CD8-positive, alpha-beta T cell (primary cell): ENCODE measurements at regions of chr1 and their contacts with region 1.

Region 1: GRCh38 chr1:109532365-109533136 is 7.1 kb upstream of the GPR61 start:
- DNase-seq: peak; percentile 83 to 97 (median 91)
- ATAC-seq: peak; percentile 90
- H3K4me3 ChIP-seq: peak overlapping the region; percentile 42 to 57
- H3K4me3 Mint-ChIP-seq: peak overlapping the region; percentile 80
- H3K27ac ChIP-seq: peak overlapping the region; percentile 17 to 52
- H3K27ac Mint-ChIP-seq: peak overlapping the region; percentile 67
- H3K4me1 ChIP-seq: peaks cover 31% of the 10 kb centered on the region
- H3K4me1 Mint-ChIP-seq: peaks cover 31% of the 10 kb centered on the region
- H3K27me3 ChIP-seq: no peaks in the 10 kb centered on the region
- H3K27me3 Mint-ChIP-seq: no peaks in the 10 kb centered on the region
- CTCF ChIP-seq: peak; percentile 88

Region 2: GRCh38 chr1:109213785-109214468 is 318.6 kb before region 1 on chr1 and contains the start of gene SARS1:
- CTCF ChIA-PET with region 1: no interaction called
- POLR2A ChIA-PET with region 1: no interaction called
- intact Hi-C with region 1: no loop called
- DNase-seq: peak; percentile 67 to 94 (median 85)
- ATAC-seq: peak; percentile 86
- H3K4me3 ChIP-seq: peak within 1 kb of the TSS; percentile 96 to 100
- H3K4me3 Mint-ChIP-seq: peak within 1 kb of the TSS; percentile 100
- H3K27ac ChIP-seq: peak within 1 kb of the TSS; percentile 79
- H3K27ac Mint-ChIP-seq: peak within 1 kb of the TSS; percentile 95
- H3K4me1 ChIP-seq: peaks cover 27% of the 10 kb centered on the region
- H3K4me1 Mint-ChIP-seq: peaks cover 44% of the 10 kb centered on the region
- H3K27me3 ChIP-seq: no peaks in the 10 kb centered on the region
- H3K27me3 Mint-ChIP-seq: peaks cover 2% of the 10 kb centered on the region
- CTCF ChIP-seq: no peak
- total RNA-seq, gene SARS1: 113 to 118 TPM

Region 3: GRCh38 chr1:109263597-109264398 is 268.8 kb before region 1 on chr1:
- CTCF ChIA-PET with region 1: interaction called, 11 read pairs
- POLR2A ChIA-PET with region 1: no interaction called
- intact Hi-C with region 1: loop called (anchors 1 kb)
- DNase-seq: peak; percentile 54 to 81 (median 75)
- ATAC-seq: peak; percentile 97
- H3K4me3 ChIP-seq: no peak overlapping the region
- H3K4me3 Mint-ChIP-seq: no peak overlapping the region
- H3K27ac ChIP-seq: no peak overlapping the region
- H3K27ac Mint-ChIP-seq: no peak overlapping the region
- H3K4me1 ChIP-seq: no peaks in the 10 kb centered on the region
- H3K4me1 Mint-ChIP-seq: no peaks in the 10 kb centered on the region
- H3K27me3 ChIP-seq: no peaks in the 10 kb centered on the region
- H3K27me3 Mint-ChIP-seq: no peaks in the 10 kb centered on the region
- CTCF ChIP-seq: peak; percentile 99

Region 4: DNA sequence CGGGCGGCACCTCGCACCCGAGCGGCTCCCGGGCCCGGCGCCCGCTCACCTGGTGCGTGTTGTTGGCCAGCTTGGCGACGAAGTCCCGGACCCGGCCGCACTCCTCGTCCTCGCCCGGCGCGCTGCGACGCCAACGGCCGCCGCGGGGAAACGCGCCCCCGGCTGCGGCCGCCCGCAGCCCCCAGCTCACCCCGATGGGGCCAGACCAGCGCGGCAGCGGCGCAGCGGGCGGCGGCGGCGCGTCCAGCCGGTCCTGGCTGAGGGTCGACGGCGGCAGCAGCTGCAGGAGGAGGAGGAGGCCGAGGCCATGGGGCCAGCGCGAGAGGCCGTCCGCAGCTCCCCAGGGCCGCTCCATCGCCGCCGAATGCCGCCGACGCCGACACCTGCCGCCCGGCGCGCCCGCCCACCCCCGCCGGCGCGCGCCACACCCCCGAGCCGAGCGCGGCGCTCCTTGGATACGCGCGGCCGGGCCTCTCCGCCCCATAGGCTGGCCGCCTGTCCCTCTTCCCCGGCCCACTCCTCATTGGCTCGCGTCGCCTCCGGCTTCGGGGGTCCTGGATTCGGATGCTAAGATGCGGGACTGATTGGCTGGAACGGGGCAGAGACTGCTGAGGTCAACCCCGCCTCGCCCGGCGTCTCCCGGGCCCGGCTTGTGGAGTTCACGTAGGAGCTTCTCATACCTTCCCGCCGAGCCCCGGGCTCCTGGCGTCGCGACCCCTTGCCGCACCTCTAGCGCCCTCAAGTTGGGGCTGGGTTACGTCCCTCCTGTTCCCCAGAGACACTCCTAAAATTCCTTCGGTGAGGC is 134.8 kb before region 1 on chr1 and contains the start of gene SORT1:
- CTCF ChIA-PET with region 1: interaction called, 17 read pairs
- POLR2A ChIA-PET with region 1: interaction called, 4 read pairs
- intact Hi-C with region 1: loop called (anchors 1 to 2 kb)
- DNase-seq: peak; percentile 25 to 84 (median 71)
- ATAC-seq: peak; percentile 97
- H3K4me3 ChIP-seq: peak within 1 kb of the TSS; percentile 49 to 53
- H3K4me3 Mint-ChIP-seq: peak within 1 kb of the TSS; percentile 83
- H3K27ac ChIP-seq: no peak within 1 kb of the TSS
- H3K27ac Mint-ChIP-seq: no peak within 1 kb of the TSS
- H3K4me1 ChIP-seq: peaks cover 9% of the 10 kb centered on the region
- H3K4me1 Mint-ChIP-seq: peaks cover 15% of the 10 kb centered on the region
- H3K27me3 ChIP-seq: peaks cover 10 to 21% of the 10 kb centered on the region in 2 experiments
- H3K27me3 Mint-ChIP-seq: peaks cover 34% of the 10 kb centered on the region
- CTCF ChIP-seq: no peak
- total RNA-seq, gene SORT1: 0.61 to 0.73 TPM

Region 5: DNA sequence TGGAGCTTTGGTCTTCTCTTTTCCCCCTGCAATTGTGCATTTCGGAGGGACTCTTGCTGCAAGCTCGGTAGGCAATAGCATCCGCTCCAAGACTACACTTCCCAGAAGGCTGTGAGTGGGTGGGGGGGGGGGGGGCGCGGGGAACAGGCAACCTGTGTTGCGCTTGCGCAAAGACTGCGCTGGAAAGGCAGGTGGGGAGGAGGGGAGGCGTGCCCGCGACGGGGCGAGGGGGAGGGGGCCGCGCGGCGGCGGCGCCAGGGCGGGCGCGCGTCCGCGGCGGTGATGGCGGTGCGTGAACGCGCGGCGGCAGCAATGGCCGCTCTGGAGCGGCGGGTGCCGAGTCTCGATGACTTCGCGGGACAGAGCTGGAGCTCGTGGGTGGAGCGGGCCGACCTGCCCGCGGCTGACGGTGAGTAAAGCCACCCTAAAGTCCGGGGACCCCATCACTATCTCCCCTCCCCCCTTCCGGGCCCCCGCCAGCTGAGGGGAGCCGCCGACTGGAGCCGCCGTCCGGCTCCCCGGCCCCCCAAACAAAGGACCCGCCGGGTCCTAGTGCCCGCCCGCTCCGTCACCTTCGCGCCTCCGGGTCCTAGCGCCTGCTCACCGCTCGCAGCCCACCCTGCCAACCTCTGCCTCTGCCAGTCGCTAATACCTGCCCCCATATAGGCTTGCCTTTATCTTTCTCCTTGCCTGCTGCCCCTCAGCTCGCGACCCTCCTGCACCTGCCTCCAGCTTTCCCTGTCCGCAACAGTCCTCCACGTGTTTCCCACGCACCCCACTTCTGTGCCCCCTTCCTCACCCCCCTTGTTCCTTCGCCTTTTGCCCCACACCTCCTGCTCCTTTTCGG is 48.7 kb before region 1 on chr1 and contains the start of gene ATXN7L2:
- CTCF ChIA-PET with region 1: interaction called, 1,903 read pairs
- POLR2A ChIA-PET with region 1: interaction called, 132 read pairs
- intact Hi-C with region 1: no loop called
- DNase-seq: peak; percentile 87 to 97 (median 92)
- ATAC-seq: peak; percentile 81
- H3K4me3 ChIP-seq: peak within 1 kb of the TSS; percentile 78 to 90
- H3K4me3 Mint-ChIP-seq: peak within 1 kb of the TSS; percentile 94
- H3K27ac ChIP-seq: peak within 1 kb of the TSS; percentile 78 to 93
- H3K27ac Mint-ChIP-seq: peak within 1 kb of the TSS; percentile 91
- H3K4me1 ChIP-seq: peaks cover 22% of the 10 kb centered on the region
- H3K4me1 Mint-ChIP-seq: peaks cover 35% of the 10 kb centered on the region
- H3K27me3 ChIP-seq: no peaks in the 10 kb centered on the region
- H3K27me3 Mint-ChIP-seq: peaks cover 2% of the 10 kb centered on the region
- CTCF ChIP-seq: no peak
- total RNA-seq, gene ATXN7L2: 16.8 to 19.4 TPM

Region 6: DNA sequence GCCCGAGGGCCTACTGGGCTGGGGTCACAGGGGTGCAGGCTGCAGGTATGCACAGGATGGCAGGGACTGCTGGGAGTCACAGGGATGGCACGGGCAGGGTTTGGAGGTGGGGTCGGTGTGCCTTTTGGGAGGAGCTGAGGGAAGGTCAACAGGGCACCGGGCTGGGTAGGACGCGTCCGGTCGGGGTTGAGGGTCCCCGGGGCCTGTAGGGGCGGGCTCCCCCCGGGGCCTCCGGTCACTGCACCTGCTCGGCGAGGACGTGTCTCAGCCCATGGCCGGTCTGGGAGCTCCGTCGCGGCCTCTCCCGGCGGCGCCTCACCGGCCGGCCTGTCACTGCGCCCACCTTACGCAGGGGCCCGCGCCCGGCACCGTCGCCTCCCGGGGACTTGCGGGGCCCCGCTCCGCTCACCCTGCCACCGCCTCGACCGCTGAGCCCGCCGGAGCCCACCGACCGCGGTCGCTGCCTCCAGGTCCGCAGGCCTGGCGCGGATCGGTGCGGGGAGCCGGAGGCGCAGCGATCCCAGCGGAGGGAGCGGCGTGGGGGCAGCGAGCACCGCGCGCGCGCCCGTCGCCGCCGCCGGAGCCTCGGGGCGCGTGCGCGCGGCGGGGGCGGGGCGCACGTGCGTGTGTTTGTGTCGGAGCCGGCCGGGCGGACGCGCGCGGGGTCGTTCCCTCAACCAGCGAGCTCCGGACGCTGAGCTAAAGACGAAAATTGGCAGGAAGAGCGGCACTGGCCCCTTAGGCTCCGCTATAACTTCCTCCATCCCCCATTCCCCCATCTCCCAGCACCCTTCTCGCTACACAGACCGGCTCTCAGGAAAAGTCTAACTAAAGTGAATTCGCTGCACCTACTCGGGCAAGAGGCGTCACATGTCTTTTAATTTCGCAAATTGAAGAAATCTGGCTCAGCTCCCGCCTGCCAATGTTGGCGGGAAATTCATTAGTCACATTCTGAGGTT is 23.1 kb before region 1 on chr1 and contains the start of gene AMIGO1:
- CTCF ChIA-PET with region 1: interaction called, 1,903 read pairs
- POLR2A ChIA-PET with region 1: interaction called, 22 read pairs
- intact Hi-C with region 1: loop called in 1 of 2 experiments (anchors 1 kb)
- DNase-seq: peak; percentile 21 to 86 (median 66)
- ATAC-seq: peak; percentile 79
- H3K4me3 ChIP-seq: peak within 1 kb of the TSS; percentile 67 to 83
- H3K4me3 Mint-ChIP-seq: peak within 1 kb of the TSS; percentile 91
- H3K27ac ChIP-seq: peak within 1 kb of the TSS; percentile 45 to 54
- H3K27ac Mint-ChIP-seq: peak within 1 kb of the TSS; percentile 94
- H3K4me1 ChIP-seq: peaks cover 67% of the 10 kb centered on the region
- H3K4me1 Mint-ChIP-seq: peaks cover 68% of the 10 kb centered on the region
- H3K27me3 ChIP-seq: no peaks in the 10 kb centered on the region
- H3K27me3 Mint-ChIP-seq: no peaks in the 10 kb centered on the region
- CTCF ChIP-seq: no peak
- total RNA-seq, gene AMIGO1: 8.6 to 9.6 TPM

Region 7: GRCh38 chr1:109548321-109549267 is 16.0 kb after region 1 on chr1 and contains the start of gene GNAI3:
- CTCF ChIA-PET with region 1: interaction called, 77 read pairs
- POLR2A ChIA-PET with region 1: interaction called, 3 read pairs
- intact Hi-C with region 1: no loop called
- DNase-seq: peak; percentile 90 to 98 (median 96)
- ATAC-seq: peak; percentile 85
- H3K4me3 ChIP-seq: peak within 1 kb of the TSS; percentile 74 to 98
- H3K4me3 Mint-ChIP-seq: peak within 1 kb of the TSS; percentile 98
- H3K27ac ChIP-seq: peak within 1 kb of the TSS; percentile 89 to 97
- H3K27ac Mint-ChIP-seq: peak within 1 kb of the TSS; percentile 99
- H3K4me1 ChIP-seq: peaks cover 28% of the 10 kb centered on the region
- H3K4me1 Mint-ChIP-seq: peaks cover 60% of the 10 kb centered on the region
- H3K27me3 ChIP-seq: no peaks in the 10 kb centered on the region
- H3K27me3 Mint-ChIP-seq: no peaks in the 10 kb centered on the region
- CTCF ChIP-seq: no peak
- total RNA-seq, gene GNAI3: 6.8 to 7.1 TPM

Region 8: GRCh38 chr1:109643385-109644230 is 111.1 kb after region 1 on chr1:
- CTCF ChIA-PET with region 1: interaction called, 14 read pairs
- POLR2A ChIA-PET with region 1: no interaction called
- intact Hi-C with region 1: no loop called
- DNase-seq: peak; percentile 73 to 94 (median 86)
- ATAC-seq: peak; percentile 94
- H3K4me3 ChIP-seq: no peak overlapping the region
- H3K4me3 Mint-ChIP-seq: no peak overlapping the region
- H3K27ac ChIP-seq: no peak overlapping the region
- H3K27ac Mint-ChIP-seq: peak overlapping the region; percentile 45
- H3K4me1 ChIP-seq: peaks cover 13% of the 10 kb centered on the region
- H3K4me1 Mint-ChIP-seq: peaks cover 6% of the 10 kb centered on the region
- H3K27me3 ChIP-seq: no peaks in the 10 kb centered on the region
- H3K27me3 Mint-ChIP-seq: peaks cover 4% of the 10 kb centered on the region
- CTCF ChIP-seq: peak; percentile 81